Activated T-helper 2 cell treated with anti-CD3 and anti-CD28 coated beads, Interferon-gamma antibody, Interleukin-2, Interleukin-4, amounts not matched to agents 10 μg/mL and 5 μg/mL and 100 μg/mL, durations not matched to agents 14 hours and 24 hours and 36 hours (primary cell): ENCODE measurements at regions of chr7 and their contacts with region 1.

Region 1: GRCh38 chr7:32891800-32892520 is 400 bp upstream of the KBTBD2 start:
- DNase-seq: peak; percentile 97
- H3K4me3 Mint-ChIP-seq: peak overlapping the region; percentile 88
- H3K27ac Mint-ChIP-seq: peak overlapping the region; percentile 99
- H3K4me1 Mint-ChIP-seq: peaks cover 45% of the 10 kb centered on the region
- H3K27me3 Mint-ChIP-seq: no peaks in the 10 kb centered on the region

Region 2: DNA sequence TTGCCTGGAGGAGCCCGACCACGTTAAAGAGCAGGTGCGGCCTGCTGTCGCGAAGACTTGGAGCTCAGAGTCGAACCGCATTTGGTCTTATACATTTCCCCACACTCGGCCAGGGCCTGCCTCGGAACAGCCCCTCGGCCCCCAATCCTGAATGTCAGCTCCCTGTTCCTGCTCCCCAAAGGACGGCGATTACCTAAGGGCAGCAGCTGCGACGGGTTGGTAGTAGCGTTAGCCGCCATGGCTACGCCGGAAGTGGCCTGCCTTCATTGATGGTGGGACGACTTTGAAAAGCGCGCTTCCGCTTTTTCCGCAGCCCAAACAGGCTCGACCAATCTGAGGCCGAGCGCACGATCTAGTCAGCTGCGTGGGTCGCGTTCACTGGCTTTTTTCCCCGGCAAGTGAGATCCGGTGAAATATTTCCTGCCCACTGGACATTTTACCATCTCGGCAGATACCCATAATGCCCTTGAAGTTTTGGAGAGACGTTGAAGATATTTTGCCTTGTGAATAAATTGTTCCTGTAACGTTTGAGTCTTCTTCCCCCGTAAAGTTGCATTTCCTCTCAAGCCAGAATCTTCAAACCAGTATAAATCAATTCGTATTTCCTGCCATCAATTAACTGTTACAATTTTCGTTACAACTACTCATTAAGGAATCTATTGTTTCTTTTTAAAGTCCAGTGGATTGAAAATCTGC is 401.7 kb before region 1 on chr7 and contains the start of gene LSM5:
- intact Hi-C with region 1: loop called (anchors 2 kb)
- DNase-seq: peak; percentile 87
- H3K4me3 Mint-ChIP-seq: peak within 1 kb of the TSS; percentile 89
- H3K27ac Mint-ChIP-seq: peak within 1 kb of the TSS; percentile 94
- H3K4me1 Mint-ChIP-seq: peaks cover 28% of the 10 kb centered on the region
- H3K27me3 Mint-ChIP-seq: no peaks in the 10 kb centered on the region
- total RNA-seq, gene LSM5: 78.9 and 88.5 TPM in 2 replicates

Region 3: GRCh38 chr7:32779167-32779566 is 112.8 kb before region 1 on chr7:
- intact Hi-C with region 1: no loop called
- DNase-seq: no peak
- H3K4me3 Mint-ChIP-seq: no peak overlapping the region
- H3K27ac Mint-ChIP-seq: no peak overlapping the region
- H3K4me1 Mint-ChIP-seq: no peaks in the 10 kb centered on the region
- H3K27me3 Mint-ChIP-seq: peaks cover 6% of the 10 kb centered on the region

Region 4: DNA sequence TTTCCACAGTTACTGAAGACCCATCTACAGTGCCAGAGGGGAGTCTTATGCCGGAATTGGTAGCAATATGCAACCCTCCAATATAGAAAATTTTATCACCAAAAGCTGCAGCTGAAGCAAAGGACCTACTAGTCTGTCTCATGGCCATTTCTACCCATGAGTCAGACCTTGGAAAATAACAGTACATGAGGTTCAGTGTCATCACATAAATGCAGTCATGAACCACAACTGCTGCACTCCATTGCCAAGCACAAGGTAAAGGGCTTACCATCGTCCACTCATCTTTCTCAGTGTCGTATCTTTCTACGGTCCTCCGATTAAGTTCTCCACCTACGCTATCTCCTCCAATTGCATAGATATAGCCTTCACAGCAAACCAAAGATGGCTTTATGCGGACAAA is 22.2 kb before region 1 on chr7:
- intact Hi-C with region 1: loop called (anchors 1 kb)
- DNase-seq: no peak
- H3K4me3 Mint-ChIP-seq: no peak overlapping the region
- H3K27ac Mint-ChIP-seq: peak overlapping the region; percentile 11
- H3K4me1 Mint-ChIP-seq: peaks cover 21% of the 10 kb centered on the region
- H3K27me3 Mint-ChIP-seq: no peaks in the 10 kb centered on the region

Region 5: GRCh38 chr7:32942786-32943653 is 51.1 kb after region 1 on chr7:
- intact Hi-C with region 1: loop called (anchors 1 kb)
- DNase-seq: peak; percentile 53
- H3K4me3 Mint-ChIP-seq: peak overlapping the region; percentile 63
- H3K27ac Mint-ChIP-seq: no peak overlapping the region
- H3K4me1 Mint-ChIP-seq: peaks cover 20% of the 10 kb centered on the region
- H3K27me3 Mint-ChIP-seq: peaks cover 7% of the 10 kb centered on the region

Region 6: GRCh38 chr7:33062782-33063443 is 171.0 kb after region 1 on chr7:
- intact Hi-C with region 1: loop called (anchors 1 kb)
- DNase-seq: peak; percentile 90
- H3K4me3 Mint-ChIP-seq: peak overlapping the region; percentile 94
- H3K27ac Mint-ChIP-seq: peak overlapping the region; percentile 89
- H3K4me1 Mint-ChIP-seq: peaks cover 35% of the 10 kb centered on the region
- H3K27me3 Mint-ChIP-seq: peaks cover 2% of the 10 kb centered on the region

Region 7: DNA sequence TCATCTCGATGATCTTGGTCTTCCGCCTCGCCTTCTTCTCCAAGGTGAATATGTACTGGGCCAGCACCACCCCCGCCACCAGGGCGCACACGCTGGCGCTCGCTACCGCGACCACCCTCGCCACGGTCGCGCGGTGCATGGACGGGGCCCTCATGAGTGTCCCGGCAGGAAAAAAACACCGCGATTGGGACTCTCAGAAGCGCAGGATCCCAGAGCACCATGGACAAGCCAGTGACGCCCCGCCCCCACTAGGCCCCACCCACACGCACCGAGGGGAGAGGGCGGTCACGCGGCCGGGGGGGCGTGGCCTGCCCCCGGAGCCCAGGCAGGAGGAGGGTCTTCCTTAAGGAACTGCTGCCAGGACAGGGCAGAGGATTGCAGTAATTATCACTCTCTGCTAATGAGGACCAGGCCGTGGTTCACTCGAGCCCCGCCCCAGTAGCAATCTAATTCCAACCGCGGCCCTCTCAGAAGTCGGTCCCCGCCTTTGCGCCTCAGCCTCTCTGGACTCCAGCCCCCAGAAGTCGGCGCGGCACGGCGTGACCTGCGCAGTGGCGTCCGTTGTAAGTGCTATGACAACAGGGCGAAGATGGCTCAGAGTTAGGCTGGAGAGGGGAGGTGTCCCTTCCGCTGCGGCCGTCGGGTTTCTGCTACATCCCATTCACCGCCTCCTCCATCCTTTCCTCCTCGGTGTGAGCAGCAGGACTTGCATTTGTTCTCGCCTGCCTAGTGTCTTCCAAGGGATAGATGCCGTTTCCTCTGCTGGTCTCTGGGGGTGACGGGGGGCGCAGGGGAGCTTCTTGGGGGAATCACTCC is 237.2 kb after region 1 on chr7 and contains the start of gene BBS9:
- intact Hi-C with region 1: loop called (anchors 2 kb)
- DNase-seq: peak; percentile 89
- H3K4me3 Mint-ChIP-seq: peak within 1 kb of the TSS; percentile 96
- H3K27ac Mint-ChIP-seq: peak within 1 kb of the TSS; percentile 83
- H3K4me1 Mint-ChIP-seq: peaks cover 19% of the 10 kb centered on the region
- H3K27me3 Mint-ChIP-seq: no peaks in the 10 kb centered on the region
- total RNA-seq, gene BBS9: 4.8 and 6.8 TPM in 2 replicates